ENCODE measurements at regions of chr7 and their contacts with region 1.

Region 1: DNA sequence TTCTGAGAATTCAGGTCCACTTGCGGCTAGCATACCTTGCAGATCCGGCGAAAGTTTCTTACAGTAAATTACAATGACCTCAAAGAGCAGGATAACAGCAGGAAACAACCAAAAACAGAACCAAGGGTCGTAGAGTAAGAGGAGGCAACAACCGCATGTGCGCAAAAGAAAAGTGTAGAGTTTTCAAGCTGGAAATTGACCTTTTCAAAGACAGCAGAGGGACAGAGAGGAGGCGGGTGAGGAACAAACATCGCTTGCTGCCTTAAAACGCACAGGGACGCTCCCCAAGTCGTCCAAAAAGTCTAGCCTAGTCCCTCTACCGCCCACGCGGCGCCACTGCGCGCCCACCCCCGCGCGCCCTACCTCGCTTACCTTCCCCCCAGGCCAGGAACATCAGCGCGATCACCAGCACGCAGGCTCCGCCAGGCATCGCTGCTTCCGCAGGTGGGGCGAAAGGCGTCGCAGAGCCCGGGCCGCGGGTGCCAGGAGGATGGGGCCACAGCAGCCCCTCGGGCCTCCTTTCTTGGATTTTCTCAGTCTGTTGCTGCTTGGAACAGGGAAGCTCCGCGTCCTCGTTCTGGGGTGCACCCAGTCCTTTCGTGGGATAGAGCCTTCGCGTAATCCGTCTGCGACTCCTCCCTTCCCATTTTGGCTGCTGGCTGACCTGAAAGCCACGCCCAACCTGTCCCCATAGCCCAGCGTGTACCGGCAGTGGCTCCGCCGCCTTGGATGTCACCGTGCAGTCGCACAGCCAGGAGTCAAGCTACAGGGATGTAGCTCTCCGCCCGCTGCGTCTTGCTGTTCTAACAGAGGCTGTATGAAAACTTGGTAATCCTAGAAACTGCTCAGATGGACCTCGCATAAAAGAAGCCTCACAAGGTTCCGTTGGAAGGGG is at the start of gene VWDE:
- DNase-seq: peak; percentile 81 to 96 (median 85)
- ATAC-seq: peak; percentile 83
- H3K4me3 ChIP-seq: peak within 1 kb of the TSS; percentile 67
- H3K27ac ChIP-seq: peak within 1 kb of the TSS; percentile 97
- H3K4me1 ChIP-seq: peaks cover 3% of the 10 kb centered on the region in 2 experiments; a peak in 3 of 5 replicates
- H3K27me3 ChIP-seq: no peaks in the 10 kb centered on the region
- CTCF ChIP-seq: peak; percentile 29 to 58 (median 45)
- EP300 ChIP-seq: peak; percentile 57
- POLR2A ChIP-seq: peak; percentile 90
- RAD21 ChIP-seq: peak in 1 of 2 experiments; percentile 22; a peak in 1 of 4 replicates
- polyA plus RNA-seq, gene VWDE: 40.6 to 51.0 TPM

Region 2: DNA sequence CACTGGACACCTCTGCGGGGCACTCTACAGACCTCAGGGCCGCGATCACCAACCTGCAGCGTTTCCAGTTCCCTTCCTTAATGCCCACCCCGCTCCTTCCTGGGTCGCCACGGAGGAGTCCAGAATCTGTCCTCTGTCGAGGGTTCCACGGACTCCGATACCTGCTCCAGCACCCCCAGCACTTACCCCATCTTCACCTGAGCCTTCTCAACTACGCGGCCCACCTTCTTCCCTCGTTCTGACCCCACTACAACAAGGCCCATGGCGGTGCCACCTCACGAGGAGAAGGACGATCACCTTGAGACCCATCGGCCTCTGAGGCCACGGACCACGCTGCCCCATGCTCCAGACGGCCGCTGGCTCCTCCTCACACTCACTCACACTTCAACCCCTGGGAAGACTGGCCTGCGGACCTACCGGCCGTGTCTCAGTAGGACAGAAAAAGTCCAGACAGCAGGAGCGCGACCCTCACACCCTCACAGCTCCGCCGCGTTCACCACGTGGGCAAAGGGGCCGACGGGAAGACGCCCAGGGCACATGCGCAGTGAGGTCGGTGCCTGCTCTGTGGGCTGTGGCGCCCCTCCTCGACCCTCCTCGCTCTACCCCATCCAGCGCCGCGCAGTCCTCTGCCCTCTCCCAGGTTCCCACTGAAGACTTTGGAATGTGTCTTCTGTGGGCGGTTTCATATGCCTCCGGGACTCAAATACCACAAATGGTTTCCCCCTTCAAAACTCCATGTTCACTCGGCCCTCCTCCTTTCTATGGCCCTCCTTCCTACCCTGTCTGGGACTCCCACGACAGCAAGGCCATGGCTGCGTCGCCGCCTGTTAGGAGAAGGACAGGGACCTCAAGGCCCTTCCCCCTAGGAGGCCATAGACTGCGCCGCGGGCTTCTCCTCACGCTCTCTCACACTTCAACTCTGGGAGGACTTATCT is 1623.8 kb before region 1 on chr7:
- CTCF ChIA-PET with region 1: no interaction called
- POLR2A ChIA-PET with region 1: no interaction called
- in situ Hi-C with region 1: no loop called
- intact Hi-C with region 1: loop called (anchors 10 kb)
- DNase-seq: peak; percentile 61 to 89 (median 70)
- ATAC-seq: peak; percentile 79
- H3K4me3 ChIP-seq: peak overlapping the region; percentile 50
- H3K27ac ChIP-seq: peak overlapping the region; percentile 94
- H3K4me1 ChIP-seq: peaks cover 3 to 12% of the 10 kb centered on the region in 2 experiments; a peak in 4 of 5 replicates
- H3K27me3 ChIP-seq: no peaks in the 10 kb centered on the region
- CTCF ChIP-seq: peak in 1 of 3 experiments; percentile 17; a peak in 2 of 6 replicates
- EP300 ChIP-seq: no peak
- POLR2A ChIP-seq: peak; percentile 84
- RAD21 ChIP-seq: no peak

Region 3: DNA sequence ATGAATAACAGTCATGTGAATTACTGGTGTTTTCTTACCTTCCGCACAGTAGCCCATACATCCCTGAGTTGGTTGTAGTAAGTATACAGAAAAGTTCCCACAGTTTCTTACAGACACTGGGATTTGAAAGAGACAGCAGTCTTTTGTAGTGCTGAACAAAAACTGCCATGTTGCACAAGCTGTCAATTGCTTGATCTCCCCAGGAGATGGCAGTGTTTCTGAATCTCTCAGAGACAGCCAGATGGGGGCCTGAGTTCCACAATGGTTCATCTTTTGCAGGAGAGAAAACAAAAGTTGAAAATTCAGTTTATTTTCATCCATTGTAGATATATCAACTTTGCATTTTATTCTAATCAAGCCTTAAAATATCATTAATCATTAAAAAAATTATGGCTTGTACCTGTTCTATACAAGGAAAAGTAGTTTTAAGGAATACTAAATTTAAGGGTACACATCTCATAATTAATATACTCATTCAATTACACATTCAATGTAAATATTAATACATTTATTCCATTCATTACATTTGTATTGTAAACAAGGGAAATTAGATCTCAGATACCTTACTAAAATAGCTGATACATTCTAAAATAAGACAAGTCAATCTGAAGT is 14.3 kb before region 1 on chr7:
- CTCF ChIA-PET with region 1: interaction called, 3 read pairs
- POLR2A ChIA-PET with region 1: interaction called, 15 read pairs
- in situ Hi-C with region 1: no loop called
- intact Hi-C with region 1: loop called (anchors 1 kb)
- DNase-seq: peak; percentile 37 to 79 (median 54)
- ATAC-seq: peak; percentile 57
- H3K4me3 ChIP-seq: no peak overlapping the region
- H3K27ac ChIP-seq: no peak overlapping the region
- H3K4me1 ChIP-seq: peaks cover 8 to 37% of the 10 kb centered on the region in 2 experiments
- H3K27me3 ChIP-seq: no peaks in the 10 kb centered on the region
- CTCF ChIP-seq: peak; percentile 67 to 95 (median 76)
- EP300 ChIP-seq: no peak
- POLR2A ChIP-seq: no peak
- RAD21 ChIP-seq: peak in 1 of 2 experiments; percentile 52; a peak in 2 of 4 replicates

Region 4: GRCh38 chr7:13981070-13981469 is 1577.5 kb after region 1 on chr7:
- CTCF ChIA-PET with region 1: no interaction called
- POLR2A ChIA-PET with region 1: no interaction called
- in situ Hi-C with region 1: no loop called
- intact Hi-C with region 1: loop called (anchors 5 kb)
- DNase-seq: peak; percentile 74 to 91 (median 79)
- ATAC-seq: peak; percentile 80
- H3K4me3 ChIP-seq: no peak overlapping the region
- H3K27ac ChIP-seq: peak overlapping the region; percentile 85
- H3K4me1 ChIP-seq: peaks cover 0 to 19% of the 10 kb centered on the region in 2 experiments; a peak in 3 of 5 replicates
- H3K27me3 ChIP-seq: no peaks in the 10 kb centered on the region
- CTCF ChIP-seq: no peak
- EP300 ChIP-seq: peak; percentile 60; the same call in 1 of the 2 replicates
- POLR2A ChIP-seq: peak; percentile 60
- RAD21 ChIP-seq: peak in 1 of 2 experiments; percentile 29; a peak in 1 of 4 replicates

Measured in K562 (cell line).